ENCODE measurements at regions of chr9 and their contacts with region 1.

Region 1: GRCh38 chr9:35657546-35658136 is at the start of gene RMRP:
- DNase-seq: peak; percentile 99
- H3K4me3 ChIP-seq: peak within 1 kb of the TSS; percentile 84 to 87 (median 86)
- H3K27ac ChIP-seq: peak within 1 kb of the TSS; percentile 94
- H3K4me1 ChIP-seq: peaks cover 10% of the 10 kb centered on the region
- H3K27me3 ChIP-seq: no peaks in the 10 kb centered on the region
- CTCF ChIP-seq: peak in 1 of 2 donors; percentile 37
- POLR2A ChIP-seq: no peak
- total RNA-seq, gene RMRP: 19,118 and 22,385 TPM in 2 replicates

Region 2: DNA sequence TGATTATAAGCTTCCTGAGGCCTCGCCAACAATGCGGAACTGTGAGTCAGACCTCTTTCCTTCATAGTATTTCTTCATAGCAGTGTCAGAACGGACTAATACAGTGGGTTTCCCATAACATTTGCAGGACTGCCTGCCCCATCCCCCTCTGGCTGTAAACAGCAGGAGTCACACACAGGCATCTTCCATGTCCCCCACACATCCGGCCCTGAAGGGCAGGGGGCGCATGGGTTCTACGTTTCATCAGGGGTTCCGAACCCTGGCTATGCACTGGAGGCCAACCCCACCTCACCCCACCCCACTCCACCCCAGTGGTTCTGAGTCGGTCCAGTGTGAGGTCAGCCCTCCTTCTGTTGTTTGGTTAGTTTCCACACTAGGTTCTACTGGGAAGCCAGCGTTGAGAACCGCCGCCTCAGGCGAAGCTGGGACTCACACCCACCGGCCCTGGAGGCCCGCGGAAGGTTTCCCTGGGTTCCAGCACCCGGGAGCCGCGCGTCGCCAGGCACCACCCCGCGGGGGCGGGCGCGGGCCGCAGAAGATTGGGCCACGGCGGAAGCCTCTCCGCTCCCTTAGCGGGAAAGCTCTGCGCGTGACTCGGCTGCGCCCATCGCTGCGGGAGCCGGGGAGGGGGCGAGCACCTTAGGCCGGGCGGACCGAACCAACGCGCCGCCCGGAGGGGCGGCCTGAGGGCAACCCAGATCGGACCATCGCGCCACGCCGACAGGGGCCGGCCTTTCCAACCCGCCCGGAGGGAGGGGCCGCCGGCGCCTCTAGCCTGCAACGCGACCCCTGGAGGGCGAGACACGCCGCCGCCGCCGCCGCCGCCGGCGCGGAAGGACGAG is 168.1 kb before region 1 on chr9 and contains the start of gene RUSC2:
- CTCF ChIA-PET with region 1: no interaction called
- POLR2A ChIA-PET with region 1: no interaction called
- dilution Hi-C with region 1: no loop called
- intact Hi-C with region 1: loop called (anchors 5 kb)
- DNase-seq: peak; percentile 88
- H3K4me3 ChIP-seq: peak within 1 kb of the TSS; percentile 62 to 91 (median 66)
- H3K27ac ChIP-seq: peak within 1 kb of the TSS; percentile 96
- H3K4me1 ChIP-seq: peaks cover 10% of the 10 kb centered on the region
- H3K27me3 ChIP-seq: no peaks in the 10 kb centered on the region
- CTCF ChIP-seq: peak; percentile 30 to 38
- POLR2A ChIP-seq: peak; percentile 84
- total RNA-seq, gene RUSC2: 46.2 and 52.1 TPM in 2 replicates

Region 3: DNA sequence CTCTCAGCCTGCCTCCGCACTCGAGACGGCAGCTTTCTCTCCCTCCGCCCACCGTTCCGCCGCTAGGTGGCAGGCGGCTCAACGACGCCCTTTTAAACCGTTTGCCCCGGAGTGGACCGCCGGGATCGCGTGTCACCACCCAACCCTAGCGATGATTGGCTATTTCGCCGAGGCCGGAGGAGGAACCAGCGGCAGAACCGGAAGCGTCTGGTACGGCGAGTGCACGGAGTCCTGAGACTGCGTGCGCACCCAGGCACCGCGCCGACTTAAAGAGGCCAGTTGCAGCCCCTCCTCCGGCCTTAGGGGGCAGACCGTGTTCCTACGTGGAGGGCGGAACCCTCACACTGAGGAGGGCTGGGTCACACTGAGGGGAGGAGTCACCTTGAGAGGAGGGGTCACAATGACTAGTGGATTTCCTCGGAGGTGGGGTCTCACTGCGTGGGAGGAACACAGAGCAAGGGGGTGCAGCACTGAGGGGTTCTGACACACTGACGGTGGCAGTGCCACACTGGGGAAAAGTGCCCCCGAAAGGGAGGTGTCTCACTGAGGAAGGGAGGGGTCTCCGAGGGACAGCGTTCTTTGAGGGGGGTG is 53.6 kb before region 1 on chr9:
- CTCF ChIA-PET with region 1: interaction called, 13 read pairs
- POLR2A ChIA-PET with region 1: no interaction called
- dilution Hi-C with region 1: no loop called
- intact Hi-C with region 1: loop called (anchors 1 kb)
- DNase-seq: peak; percentile 100
- H3K4me3 ChIP-seq: peak overlapping the region; percentile 0 to 41 (median 27)
- H3K27ac ChIP-seq: no peak overlapping the region
- H3K4me1 ChIP-seq: peaks cover 16% of the 10 kb centered on the region
- H3K27me3 ChIP-seq: peaks cover 0 to 2% of the 10 kb centered on the region in 2 experiments
- CTCF ChIP-seq: peak; percentile 88 to 99
- POLR2A ChIP-seq: no peak

Region 4: DNA sequence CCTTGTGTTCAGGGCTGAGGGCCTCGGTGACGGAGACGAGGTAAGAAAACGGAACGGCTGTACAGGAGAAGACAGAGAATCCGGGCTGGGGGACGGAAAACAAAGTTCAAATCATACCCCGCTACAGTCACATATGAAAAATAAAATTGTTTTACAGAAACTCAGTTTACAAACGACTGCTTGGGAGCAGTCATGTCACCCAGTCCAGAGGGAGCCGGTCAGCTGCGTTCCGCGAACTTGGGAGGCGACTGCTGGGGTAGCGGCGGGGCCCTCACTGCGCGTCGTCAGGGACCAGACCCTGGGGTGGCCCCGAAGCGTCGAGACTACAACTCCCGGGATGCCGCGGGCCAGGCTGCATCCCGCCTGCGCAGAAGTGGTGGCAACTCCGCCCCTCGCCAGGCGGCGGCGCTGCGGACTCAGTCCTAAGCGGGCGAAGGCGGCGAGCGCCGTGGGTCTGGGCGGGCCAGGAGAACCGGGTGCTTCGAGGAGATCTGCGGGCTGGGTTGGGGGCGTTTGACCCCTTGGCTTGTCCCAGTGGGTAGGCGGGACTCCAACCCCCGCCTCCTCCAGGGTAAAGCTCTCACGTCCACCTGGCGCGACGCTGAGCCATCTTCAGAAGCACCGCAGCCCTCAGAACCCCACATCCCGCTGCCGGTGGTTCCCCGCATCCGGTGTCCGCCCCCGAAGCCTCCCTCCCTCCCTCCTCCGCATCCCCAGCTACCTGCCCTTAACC is 10.9 kb before region 1 on chr9:
- CTCF ChIA-PET with region 1: interaction called, 27 read pairs
- POLR2A ChIA-PET with region 1: no interaction called
- dilution Hi-C with region 1: no loop called
- intact Hi-C with region 1: no loop called
- DNase-seq: peak; percentile 91
- H3K4me3 ChIP-seq: peak overlapping the region; percentile 39 to 80 (median 47)
- H3K27ac ChIP-seq: peak overlapping the region; percentile 24
- H3K4me1 ChIP-seq: peaks cover 6% of the 10 kb centered on the region
- H3K27me3 ChIP-seq: peaks cover 0 to 2% of the 10 kb centered on the region in 2 experiments
- CTCF ChIP-seq: peak; percentile 91 to 98
- POLR2A ChIP-seq: peak; percentile 27

Region 5: DNA sequence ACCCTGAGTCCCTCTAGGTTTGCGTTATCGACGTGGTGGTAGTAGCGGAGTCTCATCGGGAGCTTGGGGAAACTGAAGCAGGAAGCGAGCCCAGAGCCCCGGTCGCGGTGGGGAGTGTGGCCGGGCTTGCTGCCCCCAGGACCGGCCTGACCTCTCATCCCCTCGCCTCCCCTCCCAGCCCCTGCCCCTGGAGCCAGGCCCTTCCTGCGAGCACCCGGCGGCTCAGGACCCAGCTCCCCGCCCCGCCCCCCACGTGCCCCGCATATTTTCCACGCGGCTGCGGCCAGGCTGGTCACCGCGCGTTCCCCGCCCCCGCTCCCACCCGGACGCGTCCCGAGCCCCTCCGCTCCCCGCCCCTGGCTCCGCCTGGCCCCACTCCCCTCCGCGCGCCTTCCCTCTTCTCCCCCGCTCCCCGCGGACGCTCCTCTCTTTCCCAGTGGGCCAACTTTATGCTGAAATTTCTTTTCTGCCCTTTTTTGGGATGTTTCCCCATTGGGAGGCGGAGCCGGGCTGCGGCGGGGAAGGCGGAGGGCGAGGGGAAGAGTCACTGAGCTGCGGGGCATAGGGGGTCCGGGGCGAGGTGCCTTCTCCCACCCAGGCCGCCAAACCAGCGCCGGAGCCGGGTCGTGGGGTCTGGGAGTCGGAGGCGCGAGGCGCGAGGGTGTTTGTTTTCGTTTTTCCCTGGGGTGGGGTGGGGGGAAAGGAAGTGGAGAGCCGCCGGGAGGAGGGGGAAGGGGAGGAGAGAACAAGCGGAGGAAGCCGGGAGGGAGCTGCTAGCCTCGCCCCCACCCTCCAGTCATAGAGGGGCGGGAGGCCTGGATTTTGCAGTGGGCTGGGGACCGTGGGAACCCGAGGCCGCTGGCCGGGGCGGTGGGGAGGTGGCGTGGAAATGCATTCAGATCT is 33.0 kb after region 1 on chr9:
- CTCF ChIA-PET with region 1: interaction called, 227 read pairs
- POLR2A ChIA-PET with region 1: interaction called, 4 read pairs
- dilution Hi-C with region 1: no loop called
- intact Hi-C with region 1: loop called (anchors 1 kb)
- DNase-seq: peak; percentile 72
- H3K4me3 ChIP-seq: peak overlapping the region; percentile 66 to 82 (median 70)
- H3K27ac ChIP-seq: peak overlapping the region; percentile 45
- H3K4me1 ChIP-seq: peaks cover 28% of the 10 kb centered on the region
- H3K27me3 ChIP-seq: no peaks in the 10 kb centered on the region
- CTCF ChIP-seq: no peak
- POLR2A ChIP-seq: peak; percentile 65

Region 6: DNA sequence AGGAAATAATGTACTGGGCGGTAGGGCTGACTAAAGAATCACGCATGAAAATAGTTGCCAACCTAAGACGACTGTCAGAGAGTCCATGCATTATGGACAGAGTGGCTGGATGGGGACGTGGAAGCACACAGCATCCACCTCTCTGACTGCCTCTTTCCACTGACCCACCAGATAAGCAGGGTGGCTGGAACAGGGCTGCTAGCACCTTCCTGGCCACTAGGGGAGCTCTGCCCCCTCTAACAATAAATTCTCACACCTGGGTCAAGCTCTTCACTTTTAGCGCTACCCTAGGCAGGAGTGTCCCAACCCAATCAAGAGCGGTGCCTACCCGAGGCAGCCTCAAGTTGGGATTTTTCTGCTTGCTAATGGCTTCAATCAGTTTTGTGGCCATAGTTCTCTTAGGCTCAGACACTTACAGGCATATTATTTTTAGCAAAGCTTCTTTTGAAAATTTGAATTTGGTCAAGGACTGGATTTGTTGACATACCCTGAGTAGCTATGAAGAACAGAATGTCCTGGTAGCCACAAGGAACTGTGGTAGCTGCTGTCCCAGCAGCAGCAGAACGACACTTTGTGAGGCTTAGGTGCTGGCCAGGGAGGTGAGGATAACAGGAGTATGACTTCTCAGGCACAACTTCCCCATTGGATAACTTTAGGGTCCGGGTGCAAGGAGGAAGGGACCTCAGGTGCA is 39.0 kb after region 1 on chr9:
- CTCF ChIA-PET with region 1: interaction called, 227 read pairs
- POLR2A ChIA-PET with region 1: no interaction called
- dilution Hi-C with region 1: no loop called
- intact Hi-C with region 1: loop called (anchors 1 kb)
- DNase-seq: peak; percentile 59
- H3K4me3 ChIP-seq: no peak overlapping the region
- H3K27ac ChIP-seq: no peak overlapping the region
- H3K4me1 ChIP-seq: no peaks in the 10 kb centered on the region
- H3K27me3 ChIP-seq: no peaks in the 10 kb centered on the region
- CTCF ChIP-seq: peak; percentile 86 to 94
- POLR2A ChIP-seq: peak; percentile 30

Region 7: DNA sequence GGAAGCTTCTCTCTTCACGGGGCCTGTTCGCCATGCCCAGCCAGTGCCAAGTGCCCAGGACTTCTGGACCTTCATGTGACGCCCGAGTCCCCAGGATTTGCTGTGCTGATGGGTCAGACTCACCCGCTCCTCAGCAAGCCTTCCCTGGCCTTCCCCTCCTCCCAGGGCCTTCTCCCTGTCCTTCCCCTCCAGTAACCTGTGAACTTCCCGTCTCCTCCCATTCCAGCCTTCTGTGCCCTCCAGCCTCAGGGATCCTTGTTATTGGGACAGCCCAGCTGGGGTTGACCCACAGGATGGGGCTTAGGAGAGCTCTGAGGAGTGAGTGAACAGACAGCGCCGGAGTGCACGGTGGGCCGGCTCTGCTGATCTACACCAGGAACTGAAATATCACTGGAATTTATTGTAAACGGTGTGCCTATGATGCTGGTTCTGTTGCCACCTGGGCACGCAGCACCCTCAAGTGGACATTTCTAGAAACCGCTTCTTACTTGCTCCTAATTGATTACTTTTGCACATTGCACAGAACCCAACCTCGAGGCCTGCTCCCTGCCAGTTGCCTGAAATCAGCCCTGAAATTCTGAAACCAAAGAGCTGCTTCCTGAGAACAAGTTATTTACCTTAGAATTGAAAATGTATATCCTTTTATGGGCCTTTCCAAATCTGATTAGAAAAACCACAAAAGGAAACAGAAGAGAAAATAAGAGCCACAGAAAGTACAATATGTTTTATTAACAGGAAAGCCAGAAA is 253.1 kb after region 1 on chr9:
- CTCF ChIA-PET with region 1: no interaction called
- POLR2A ChIA-PET with region 1: no interaction called
- dilution Hi-C with region 1: no loop called
- intact Hi-C with region 1: loop called (anchors 5 kb)
- DNase-seq: peak; percentile 86
- H3K4me3 ChIP-seq: peak overlapping the region in 2 of 3 experiments; percentile 4 to 53
- H3K27ac ChIP-seq: peak overlapping the region; percentile 94
- H3K4me1 ChIP-seq: peaks cover 68% of the 10 kb centered on the region
- H3K27me3 ChIP-seq: no peaks in the 10 kb centered on the region
- CTCF ChIP-seq: peak; percentile 60 to 65
- POLR2A ChIP-seq: peak; percentile 61

Region 8: GRCh38 chr9:36041506-36041905 is 383.9 kb after region 1 on chr9:
- CTCF ChIA-PET with region 1: no interaction called
- POLR2A ChIA-PET with region 1: no interaction called
- dilution Hi-C with region 1: no loop called
- intact Hi-C with region 1: no loop called
- DNase-seq: peak; percentile 29
- H3K4me3 ChIP-seq: peak overlapping the region in 1 of 3 experiments; percentile 20
- H3K27ac ChIP-seq: peak overlapping the region; percentile 14
- H3K4me1 ChIP-seq: peaks cover 34% of the 10 kb centered on the region
- H3K27me3 ChIP-seq: no peaks in the 10 kb centered on the region
- CTCF ChIP-seq: no peak
- POLR2A ChIP-seq: no peak